ENCODE measurements at regions of chr22 and their contacts with region 1.

Region 1: DNA sequence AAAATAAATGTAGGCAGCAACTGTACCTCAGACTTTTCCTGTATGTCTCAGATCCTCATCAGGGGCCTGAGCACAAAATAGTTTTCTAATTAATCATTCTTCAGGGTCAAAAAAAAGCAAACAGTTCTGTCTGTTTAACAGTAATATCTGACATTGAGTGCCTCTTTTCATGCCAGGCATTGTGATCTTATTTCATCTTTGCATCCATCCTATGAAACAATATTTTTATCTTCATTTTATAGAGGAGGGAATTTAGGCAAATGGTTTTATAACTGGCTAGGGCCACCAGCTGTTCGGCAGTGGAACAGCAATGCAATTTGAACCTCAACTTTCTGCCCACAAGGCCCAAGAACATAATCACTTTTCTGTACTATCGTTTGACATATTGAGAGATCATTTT is 145.6 kb downstream of the WNT7B start:
- DNase-seq: peak; percentile 14
- H3K4me3 Mint-ChIP-seq: no peak overlapping the region
- H3K27ac Mint-ChIP-seq: no peak overlapping the region
- H3K4me1 Mint-ChIP-seq: peaks cover 22% of the 10 kb centered on the region
- H3K27me3 Mint-ChIP-seq: no peaks in the 10 kb centered on the region
- CTCF ChIP-seq: peak; percentile 61

Region 2: DNA sequence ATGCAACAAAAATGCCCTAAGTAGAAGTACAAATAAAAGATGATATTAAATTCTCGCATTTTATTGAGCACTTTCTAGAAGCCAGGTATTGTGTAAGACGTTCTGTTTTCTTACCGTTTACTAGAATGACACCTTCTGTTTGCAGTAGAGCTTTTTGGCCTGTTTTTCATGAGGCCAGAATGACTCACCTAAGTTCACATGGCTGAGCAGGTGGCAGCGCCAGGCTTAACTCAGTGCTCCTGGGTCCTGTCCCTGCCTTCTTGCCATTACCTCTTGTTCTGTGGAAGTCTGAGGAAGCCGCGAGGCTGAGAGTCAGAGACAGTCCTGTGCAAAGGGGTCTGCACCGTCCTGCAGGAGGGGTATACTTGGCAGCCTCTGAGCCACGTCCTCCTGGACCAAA is 45.9 kb before region 1 on chr22:
- CTCF ChIA-PET with region 1: no interaction called
- intact Hi-C with region 1: loop called (anchors 5 kb)
- DNase-seq: peak; percentile 67
- H3K4me3 Mint-ChIP-seq: peak overlapping the region; percentile 50
- H3K27ac Mint-ChIP-seq: peak overlapping the region; percentile 78
- H3K4me1 Mint-ChIP-seq: peaks cover 80% of the 10 kb centered on the region
- H3K27me3 Mint-ChIP-seq: no peaks in the 10 kb centered on the region
- CTCF ChIP-seq: no peak

Region 3: GRCh38 chr22:45852826-45853225 is 21.4 kb after region 1 on chr22:
- CTCF ChIA-PET with region 1: no interaction called
- intact Hi-C with region 1: no loop called
- DNase-seq: no peak
- H3K4me3 Mint-ChIP-seq: no peak overlapping the region
- H3K27ac Mint-ChIP-seq: no peak overlapping the region
- H3K4me1 Mint-ChIP-seq: no peaks in the 10 kb centered on the region
- H3K27me3 Mint-ChIP-seq: no peaks in the 10 kb centered on the region
- CTCF ChIP-seq: no peak

Region 4: DNA sequence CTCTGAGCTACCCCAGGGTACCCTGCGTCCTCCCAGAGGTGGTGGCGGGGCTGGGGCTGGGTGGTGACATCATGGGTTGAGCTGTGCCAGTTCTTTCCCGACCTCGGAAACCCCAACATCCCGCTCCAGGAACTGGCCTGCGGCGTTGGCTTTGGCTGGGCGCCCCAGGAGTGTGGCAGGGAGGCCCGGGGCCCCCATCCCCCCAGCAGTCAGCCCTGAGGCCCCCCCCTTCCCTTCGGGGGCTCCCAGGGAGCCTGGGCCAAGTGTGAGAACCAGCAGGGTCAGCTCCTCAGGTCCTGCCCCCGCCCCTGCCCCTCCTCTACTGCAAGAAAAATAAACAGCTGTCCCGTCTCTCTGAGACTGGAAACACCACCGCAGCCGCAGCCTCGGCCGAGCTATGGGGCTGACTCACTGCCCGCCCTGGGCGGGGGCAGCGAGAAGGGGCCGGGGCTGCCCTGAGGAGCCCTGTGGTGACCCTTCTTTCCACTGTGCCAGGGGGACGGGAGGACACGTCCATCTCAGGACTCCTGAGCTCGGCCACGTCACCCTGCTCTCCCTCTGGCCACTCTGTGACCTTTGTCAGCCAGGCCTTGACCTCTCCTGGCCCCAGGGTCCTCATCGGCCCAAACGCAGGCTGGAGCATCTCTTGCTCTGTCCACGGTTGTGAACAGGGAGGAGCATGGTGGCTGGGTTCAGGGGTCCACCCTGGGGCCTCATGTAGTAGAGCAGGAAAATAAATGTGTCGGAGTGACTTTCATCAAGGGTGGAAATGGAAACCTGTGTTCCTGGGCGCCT is 72.2 kb after region 1 on chr22:
- CTCF ChIA-PET with region 1: no interaction called
- intact Hi-C with region 1: no loop called
- DNase-seq: peak; percentile 62
- H3K4me3 Mint-ChIP-seq: peak overlapping the region; percentile 26
- H3K27ac Mint-ChIP-seq: no peak overlapping the region
- H3K4me1 Mint-ChIP-seq: peaks cover 25% of the 10 kb centered on the region
- H3K27me3 Mint-ChIP-seq: peaks cover 15% of the 10 kb centered on the region
- CTCF ChIP-seq: no peak

Measured in Calu3 (cell line).